Caco-2 (cell line): ENCODE measurements at regions of chr18 and their contacts with region 1.

Region 1: DNA sequence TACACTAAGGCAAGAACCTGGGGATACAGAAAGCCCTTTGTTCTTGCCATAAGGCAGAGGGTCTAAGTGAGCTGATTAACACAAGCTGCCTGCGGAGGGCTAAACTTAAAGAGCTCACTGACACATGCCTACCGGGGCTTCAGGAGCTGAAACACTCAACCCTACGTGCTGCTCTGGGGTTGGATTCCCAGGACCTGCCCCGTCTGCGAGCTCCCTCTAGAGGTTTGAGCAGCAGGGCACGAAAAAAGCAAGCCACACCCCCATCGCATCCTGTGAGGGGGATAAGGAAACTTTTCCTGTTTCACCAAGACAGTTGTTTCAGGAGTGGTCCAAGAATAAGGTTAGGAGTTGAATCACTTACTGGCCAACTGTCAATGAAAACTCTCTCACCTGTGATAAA is 562.1 kb downstream of the TMX3 start:
- DNase-seq: peak in 1 of 2 experiments; percentile 23
- H3K4me3 ChIP-seq: no peak overlapping the region
- H3K4me3 Mint-ChIP-seq: no peak overlapping the region
- H3K27ac Mint-ChIP-seq: no peak overlapping the region
- H3K4me1 ChIP-seq: no peaks in the 10 kb centered on the region
- H3K4me1 Mint-ChIP-seq: no peaks in the 10 kb centered on the region
- H3K27me3 ChIP-seq: no peaks in the 10 kb centered on the region
- H3K27me3 Mint-ChIP-seq: peaks cover 3% of the 10 kb centered on the region
- CTCF ChIP-seq: peak in 1 of 2 experiments; percentile 12

Region 2: DNA sequence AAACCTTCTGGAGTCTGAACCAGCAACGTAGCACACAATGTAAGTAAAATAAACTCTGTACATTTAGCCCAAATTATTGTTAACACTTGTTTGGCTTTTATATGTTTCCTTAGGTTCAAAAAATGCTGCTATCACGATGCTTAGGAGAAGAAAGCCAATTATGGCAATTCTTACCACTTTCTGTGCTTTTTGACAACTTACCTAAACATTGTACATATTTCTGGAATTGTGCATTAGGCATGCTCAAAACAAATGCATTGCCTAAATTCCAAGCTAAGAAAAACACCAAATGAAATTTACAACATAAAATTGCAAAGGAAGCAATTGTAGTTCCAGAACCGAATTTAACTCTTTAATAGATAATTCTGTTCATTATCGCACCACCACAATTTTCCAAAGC is 50.7 kb before region 1 on chr18:
- CTCF ChIA-PET with region 1: no interaction called
- POLR2A ChIA-PET with region 1: no interaction called
- intact Hi-C with region 1: no loop called
- DNase-seq: no peak
- H3K4me3 ChIP-seq: no peak overlapping the region
- H3K4me3 Mint-ChIP-seq: no peak overlapping the region
- H3K27ac Mint-ChIP-seq: no peak overlapping the region
- H3K4me1 ChIP-seq: no peaks in the 10 kb centered on the region
- H3K4me1 Mint-ChIP-seq: no peaks in the 10 kb centered on the region
- H3K27me3 ChIP-seq: no peaks in the 10 kb centered on the region
- H3K27me3 Mint-ChIP-seq: no peaks in the 10 kb centered on the region
- CTCF ChIP-seq: no peak

Region 3: GRCh38 chr18:68164909-68165308 is 12.1 kb after region 1 on chr18:
- CTCF ChIA-PET with region 1: no interaction called
- POLR2A ChIA-PET with region 1: no interaction called
- intact Hi-C with region 1: loop called (anchors 1 kb)
- DNase-seq: no peak
- H3K4me3 ChIP-seq: no peak overlapping the region
- H3K4me3 Mint-ChIP-seq: no peak overlapping the region
- H3K27ac Mint-ChIP-seq: no peak overlapping the region
- H3K4me1 ChIP-seq: no peaks in the 10 kb centered on the region
- H3K4me1 Mint-ChIP-seq: no peaks in the 10 kb centered on the region
- H3K27me3 ChIP-seq: no peaks in the 10 kb centered on the region
- H3K27me3 Mint-ChIP-seq: no peaks in the 10 kb centered on the region
- CTCF ChIP-seq: no peak

Region 4: GRCh38 chr18:68215931-68216330 is 63.2 kb after region 1 on chr18:
- CTCF ChIA-PET with region 1: no interaction called
- POLR2A ChIA-PET with region 1: no interaction called
- intact Hi-C with region 1: no loop called
- DNase-seq: no peak
- H3K4me3 ChIP-seq: no peak overlapping the region
- H3K4me3 Mint-ChIP-seq: no peak overlapping the region
- H3K27ac Mint-ChIP-seq: no peak overlapping the region
- H3K4me1 ChIP-seq: no peaks in the 10 kb centered on the region
- H3K4me1 Mint-ChIP-seq: no peaks in the 10 kb centered on the region
- H3K27me3 ChIP-seq: no peaks in the 10 kb centered on the region
- H3K27me3 Mint-ChIP-seq: no peaks in the 10 kb centered on the region
- CTCF ChIP-seq: no peak